ENCODE measurements at regions of chr16 and their contacts with region 1.

Region 1: GRCh38 chr16:27268376-27269299 is at the start of gene NSMCE1:
- DNase-seq: peak; percentile 96
- ATAC-seq: peak; percentile 94
- H3K4me3 ChIP-seq: peak within 1 kb of the TSS; percentile 83 to 96 (median 94)
- H3K27ac ChIP-seq: peak within 1 kb of the TSS; percentile 79
- H3K4me1 ChIP-seq: peaks cover 81% of the 10 kb centered on the region
- H3K27me3 ChIP-seq: no peaks in the 10 kb centered on the region; a peak in 1 of 5 replicates
- CTCF ChIP-seq: peak; percentile 40
- EP300 ChIP-seq: no peak
- POLR2A ChIP-seq: peak; percentile 87 to 93
- RAD21 ChIP-seq: peak; percentile 23; the same call in 1 of the 2 replicates
- total RNA-seq, gene NSMCE1: 52.9 and 53.2 TPM in 2 replicates

Region 2: GRCh38 chr16:27235055-27235937 is 33.3 kb before region 1 on chr16:
- CTCF ChIA-PET with region 1: no interaction called
- POLR2A ChIA-PET with region 1: interaction called, 11 read pairs
- in situ Hi-C with region 1: no loop called
- intact Hi-C with region 1: loop called (anchors 2 kb)
- DNase-seq: peak; percentile 60
- ATAC-seq: peak; percentile 77
- H3K4me3 ChIP-seq: no peak overlapping the region
- H3K27ac ChIP-seq: no peak overlapping the region
- H3K4me1 ChIP-seq: no peaks in the 10 kb centered on the region
- H3K27me3 ChIP-seq: no peaks in the 10 kb centered on the region
- CTCF ChIP-seq: peak; percentile 85
- EP300 ChIP-seq: no peak
- POLR2A ChIP-seq: no peak
- RAD21 ChIP-seq: peak; percentile 88

Region 3: DNA sequence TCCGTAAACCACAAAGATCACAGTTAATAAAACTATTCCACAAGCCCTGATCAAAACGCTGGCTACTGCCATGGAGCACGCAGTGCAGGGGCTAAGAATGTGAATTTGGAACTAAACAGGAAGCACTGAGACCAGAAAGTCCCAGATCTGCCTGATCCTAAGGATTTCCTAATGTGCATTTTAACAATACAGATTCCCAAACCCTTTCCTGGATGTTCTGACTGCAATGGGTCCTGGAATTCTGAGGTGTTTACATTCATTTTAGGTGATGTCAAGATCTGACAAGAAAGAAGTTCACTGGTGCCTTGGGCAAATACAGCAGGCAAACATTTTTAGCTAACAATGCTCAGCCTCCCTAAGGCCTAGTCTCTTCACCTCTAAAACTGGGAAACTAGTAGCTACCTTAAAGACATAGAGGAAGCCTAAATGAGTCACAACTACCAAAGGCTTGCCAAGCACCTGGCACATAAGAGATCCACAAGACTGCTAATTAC is 10.3 kb before region 1 on chr16:
- CTCF ChIA-PET with region 1: no interaction called
- POLR2A ChIA-PET with region 1: interaction called, 13 read pairs
- in situ Hi-C with region 1: no loop called
- intact Hi-C with region 1: no loop called
- DNase-seq: peak; percentile 84
- ATAC-seq: peak; percentile 80
- H3K4me3 ChIP-seq: no peak overlapping the region
- H3K27ac ChIP-seq: peak overlapping the region; percentile 46
- H3K4me1 ChIP-seq: peaks cover 50% of the 10 kb centered on the region
- H3K27me3 ChIP-seq: no peaks in the 10 kb centered on the region
- CTCF ChIP-seq: no peak
- EP300 ChIP-seq: peak in 1 of 2 experiments; percentile 49; a peak in 1 of 4 replicates
- POLR2A ChIP-seq: no peak
- RAD21 ChIP-seq: no peak

Region 4: GRCh38 chr16:27313422-27314160 is 45.0 kb after region 1 on chr16 and contains the start of gene IL4R:
- CTCF ChIA-PET with region 1: no interaction called
- POLR2A ChIA-PET with region 1: interaction called, 10 read pairs
- in situ Hi-C with region 1: loop called (anchors 5 kb)
- intact Hi-C with region 1: no loop called
- DNase-seq: peak; percentile 94
- ATAC-seq: peak; percentile 84
- H3K4me3 ChIP-seq: peak within 1 kb of the TSS; percentile 88 to 99 (median 97)
- H3K27ac ChIP-seq: peak within 1 kb of the TSS; percentile 75
- H3K4me1 ChIP-seq: peaks cover 74% of the 10 kb centered on the region
- H3K27me3 ChIP-seq: peaks cover 1 to 17% of the 10 kb centered on the region in 2 experiments; a peak in 3 of 5 replicates
- CTCF ChIP-seq: no peak
- EP300 ChIP-seq: peak in 1 of 2 experiments; percentile 32; a peak in 1 of 4 replicates
- POLR2A ChIP-seq: peak; percentile 63 to 91
- RAD21 ChIP-seq: peak; percentile 23
- total RNA-seq, gene IL4R: 7.6 and 15.9 TPM in 2 replicates

Region 5: GRCh38 chr16:27335349-27336053 is 66.9 kb after region 1 on chr16:
- CTCF ChIA-PET with region 1: no interaction called
- POLR2A ChIA-PET with region 1: no interaction called
- in situ Hi-C with region 1: no loop called
- intact Hi-C with region 1: no loop called
- DNase-seq: no peak
- ATAC-seq: no peak; the same call in 2 of the 3 replicates
- H3K4me3 ChIP-seq: no peak overlapping the region
- H3K27ac ChIP-seq: no peak overlapping the region
- H3K4me1 ChIP-seq: peaks cover 7% of the 10 kb centered on the region
- H3K27me3 ChIP-seq: no peaks in the 10 kb centered on the region
- CTCF ChIP-seq: no peak
- EP300 ChIP-seq: no peak
- POLR2A ChIP-seq: no peak
- RAD21 ChIP-seq: no peak

Measured in HepG2 (cell line).